ENCODE measurements at regions of chr3 and their contacts with region 1.

Region 1: DNA sequence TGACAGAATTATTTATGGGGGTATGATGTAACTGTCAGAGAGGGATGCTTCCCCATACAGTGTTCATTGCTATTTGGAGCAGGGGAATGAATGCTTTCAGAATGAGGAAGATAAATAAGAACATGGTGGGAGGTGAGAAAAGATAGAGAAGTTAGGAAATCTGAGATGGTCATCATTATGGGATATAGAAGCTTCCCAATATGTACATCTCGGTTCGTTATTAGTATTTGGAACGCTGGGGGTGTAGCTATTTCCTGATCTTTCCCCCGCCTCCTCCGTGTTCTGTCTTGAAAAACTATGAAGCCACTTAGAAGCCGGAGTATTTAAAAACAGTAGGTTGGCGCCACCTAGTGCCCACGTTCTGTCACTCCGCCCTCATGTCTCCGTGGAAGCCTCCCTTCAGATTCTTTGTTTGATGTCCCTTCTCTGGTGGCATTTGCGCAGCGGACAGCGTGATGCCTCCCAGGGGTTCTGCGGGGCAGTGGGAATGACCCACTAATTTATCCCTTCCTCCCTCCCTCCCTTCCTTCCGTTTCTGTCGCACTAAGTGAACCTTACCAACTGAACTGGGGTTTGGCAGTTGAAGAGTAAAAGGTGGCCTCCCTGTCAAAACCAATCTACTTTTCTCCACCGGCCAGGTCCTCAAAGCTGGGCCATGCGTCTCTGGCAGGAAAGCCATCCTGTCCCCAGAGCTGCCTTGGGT is 184.5 kb downstream of the FEZF2 start:
- DNase-seq: peak; percentile 74 to 81 (median 76)
- ATAC-seq: peak; percentile 79
- H3K4me3 ChIP-seq: no peak overlapping the region
- H3K27ac ChIP-seq: no peak overlapping the region
- H3K4me1 ChIP-seq: no peaks in the 10 kb centered on the region
- H3K27me3 ChIP-seq: no peaks in the 10 kb centered on the region
- CTCF ChIP-seq: peak; percentile 65 to 82 (median 78)
- POLR2A ChIP-seq: no peak

Region 2: DNA sequence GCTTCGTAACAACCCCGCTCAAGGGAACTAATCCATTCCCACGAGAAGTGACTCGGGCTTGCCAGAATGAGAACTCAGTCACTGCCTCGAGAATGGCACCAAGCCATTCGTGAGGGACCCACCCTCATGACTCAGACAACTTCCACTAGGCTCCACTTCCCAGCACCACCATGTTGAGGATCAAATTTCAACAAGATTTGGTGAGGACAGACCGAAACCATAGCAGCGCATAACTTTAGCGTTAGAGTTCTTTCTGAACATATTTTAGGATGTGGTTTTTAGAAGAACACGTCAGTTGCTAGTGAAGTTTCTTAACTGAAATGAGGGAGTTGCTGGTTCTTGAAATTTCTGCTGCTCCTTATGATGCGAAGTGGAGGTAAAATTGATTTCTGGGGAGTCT is 614.0 kb before region 1 on chr3:
- intact Hi-C with region 1: loop called (anchors 10 kb)
- DNase-seq: no peak
- ATAC-seq: no peak
- H3K4me3 ChIP-seq: no peak overlapping the region
- H3K27ac ChIP-seq: no peak overlapping the region
- H3K4me1 ChIP-seq: peaks cover 9% of the 10 kb centered on the region
- H3K27me3 ChIP-seq: no peaks in the 10 kb centered on the region
- CTCF ChIP-seq: no peak
- POLR2A ChIP-seq: no peak

Region 3: DNA sequence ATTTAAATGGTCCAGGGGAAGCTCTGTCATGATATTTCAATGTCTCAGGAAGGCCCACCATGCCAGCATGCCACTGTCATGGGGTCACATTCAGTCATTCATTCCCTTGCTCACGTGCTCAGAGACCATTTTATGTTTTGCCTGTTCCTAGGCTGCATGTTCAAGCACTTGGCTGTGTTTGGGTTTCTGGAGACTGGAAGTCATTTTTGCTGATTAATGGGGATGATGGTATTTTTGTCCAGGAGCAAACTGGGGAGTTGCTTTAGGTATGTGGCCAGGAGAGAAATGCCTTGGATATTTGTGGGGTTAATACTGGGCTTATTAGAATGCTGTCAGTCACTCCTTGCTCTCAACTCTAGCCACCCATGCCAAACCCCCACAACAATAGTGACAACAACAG is 323.9 kb before region 1 on chr3:
- intact Hi-C with region 1: loop called (anchors 10 kb)
- DNase-seq: no peak
- ATAC-seq: no peak
- H3K4me3 ChIP-seq: no peak overlapping the region
- H3K27ac ChIP-seq: no peak overlapping the region
- H3K4me1 ChIP-seq: no peaks in the 10 kb centered on the region
- H3K27me3 ChIP-seq: no peaks in the 10 kb centered on the region
- CTCF ChIP-seq: no peak
- POLR2A ChIP-seq: no peak

Region 4: DNA sequence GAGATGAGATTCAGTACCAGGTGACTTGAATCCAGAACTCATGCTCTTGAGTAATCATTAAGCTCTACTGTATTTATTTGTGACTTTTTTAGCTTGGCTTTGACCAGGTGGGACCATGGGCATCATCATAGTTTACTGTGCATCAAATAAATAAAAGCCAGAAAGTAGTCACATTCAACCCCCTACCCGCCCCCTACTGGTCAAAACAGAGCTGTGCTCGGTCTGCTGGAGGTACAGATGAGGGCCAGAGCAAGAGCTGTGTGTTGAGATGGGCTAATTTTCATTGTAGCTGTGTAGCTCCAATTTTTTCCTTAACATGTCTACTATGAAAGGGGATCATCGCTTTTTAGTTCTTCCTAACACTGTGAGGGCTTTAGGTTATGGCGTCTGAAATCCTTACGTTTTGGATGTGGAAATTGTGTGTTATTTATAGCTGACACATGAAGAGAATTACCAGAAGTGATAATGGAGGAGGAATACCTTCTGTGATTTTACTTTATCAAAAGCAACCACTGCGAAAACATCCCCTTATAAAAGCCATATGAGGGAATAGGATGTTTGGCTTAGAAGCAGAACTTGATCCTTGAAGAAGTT is 252.4 kb before region 1 on chr3:
- intact Hi-C with region 1: no loop called
- DNase-seq: peak in 1 of 4 donors; percentile 8
- ATAC-seq: no peak
- H3K4me3 ChIP-seq: no peak overlapping the region
- H3K27ac ChIP-seq: no peak overlapping the region
- H3K4me1 ChIP-seq: peaks cover 6% of the 10 kb centered on the region
- H3K27me3 ChIP-seq: no peaks in the 10 kb centered on the region
- CTCF ChIP-seq: peak in 5 of 7 experiments; percentile 14 to 20 (median 16)
- POLR2A ChIP-seq: no peak

Region 5: GRCh38 chr3:62415312-62415801 is 226.5 kb after region 1 on chr3:
- intact Hi-C with region 1: no loop called
- DNase-seq: no peak
- ATAC-seq: no peak
- H3K4me3 ChIP-seq: no peak overlapping the region
- H3K27ac ChIP-seq: no peak overlapping the region
- H3K4me1 ChIP-seq: no peaks in the 10 kb centered on the region
- H3K27me3 ChIP-seq: no peaks in the 10 kb centered on the region
- CTCF ChIP-seq: no peak
- POLR2A ChIP-seq: no peak

Measured in body of pancreas (tissue), 4 donors.